ENCODE measurements at regions of chr4 and their contacts with region 1.

Region 1: DNA sequence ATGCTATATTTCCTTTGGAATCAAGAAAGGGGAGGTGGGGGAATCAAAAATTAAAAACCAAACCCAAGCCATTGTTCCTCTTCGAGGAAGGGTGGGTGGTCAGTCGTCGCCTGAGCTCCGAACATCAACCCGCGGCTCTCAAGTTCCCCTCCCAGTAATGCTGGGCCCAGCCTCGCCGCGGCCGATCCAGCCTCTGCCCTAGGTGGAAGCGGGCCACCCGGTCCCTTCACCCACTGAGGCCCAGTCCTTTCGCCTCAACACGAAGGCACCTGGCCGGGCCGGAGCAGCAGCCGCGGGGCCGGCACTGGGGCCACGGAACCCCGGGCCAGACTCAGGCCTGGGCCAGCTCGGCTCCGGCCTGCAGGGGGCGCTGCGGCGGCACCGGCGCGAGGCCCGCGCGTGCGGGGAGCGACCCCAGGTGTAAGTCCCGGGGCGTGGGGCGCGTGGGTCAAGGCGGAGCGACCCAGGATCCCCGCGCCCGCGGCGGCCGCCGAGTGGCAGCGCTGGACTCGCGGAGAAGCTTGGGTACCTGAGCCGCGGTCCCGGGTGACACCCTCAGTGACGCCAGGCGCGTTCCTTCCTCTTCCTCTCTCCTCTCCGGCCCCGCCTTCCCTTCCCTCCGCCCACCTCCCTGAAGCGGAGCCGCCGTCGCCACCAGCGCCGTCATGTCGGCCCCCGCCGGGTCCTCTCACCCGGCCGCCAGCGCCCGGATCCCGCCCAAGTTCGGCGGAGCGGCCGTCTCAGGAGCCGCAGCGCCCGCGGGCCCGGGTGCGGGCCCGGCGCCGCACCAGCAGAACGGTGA is at the start of gene SEC24B:
- DNase-seq: peak; percentile 67
- ATAC-seq: peak; percentile 86
- H3K4me3 ChIP-seq: peak within 1 kb of the TSS; percentile 79
- H3K27ac ChIP-seq: peak within 1 kb of the TSS; percentile 43
- H3K4me1 ChIP-seq: peaks cover 22% of the 10 kb centered on the region
- H3K27me3 ChIP-seq: no peaks in the 10 kb centered on the region
- CTCF ChIP-seq: peak; percentile 68
- total RNA-seq, gene SEC24B: 10.2 and 11.3 TPM in 2 replicates

Region 2: GRCh38 chr4:109559983-109560686 is 126.7 kb after region 1 on chr4 and contains the start of gene MCUB:
- CTCF ChIA-PET with region 1: no interaction called
- POLR2A ChIA-PET with region 1: interaction called, 10 read pairs
- intact Hi-C with region 1: loop called (anchors 5 kb)
- DNase-seq: peak; percentile 89
- ATAC-seq: peak; percentile 91
- H3K4me3 ChIP-seq: peak within 1 kb of the TSS; percentile 96
- H3K27ac ChIP-seq: peak within 1 kb of the TSS; percentile 73
- H3K4me1 ChIP-seq: peaks cover 15% of the 10 kb centered on the region
- H3K27me3 ChIP-seq: no peaks in the 10 kb centered on the region
- CTCF ChIP-seq: no peak
- total RNA-seq, gene MCUB: 18.4 and 21.7 TPM in 2 replicates

Region 3: DNA sequence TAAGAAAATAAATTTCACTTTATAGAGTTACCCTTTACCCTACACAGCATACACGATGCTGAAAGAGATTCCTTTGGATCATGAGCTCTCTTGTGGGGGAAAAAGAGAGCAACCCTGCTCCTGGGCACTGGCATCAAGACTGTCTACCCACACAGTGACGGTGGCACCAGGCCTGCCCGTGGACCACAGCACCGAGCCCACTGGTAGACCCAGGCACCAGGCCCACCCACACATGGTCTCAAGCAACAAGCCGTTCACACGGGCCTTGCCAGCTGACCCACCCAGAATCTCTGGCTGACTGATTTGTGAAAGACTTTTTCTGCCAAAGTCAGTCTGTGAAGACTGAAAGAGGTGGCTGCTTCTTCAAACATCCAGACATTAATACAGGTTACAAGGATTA is 361.7 kb after region 1 on chr4:
- CTCF ChIA-PET with region 1: no interaction called
- POLR2A ChIA-PET with region 1: no interaction called
- intact Hi-C with region 1: no loop called
- DNase-seq: no peak
- ATAC-seq: no peak
- H3K4me3 ChIP-seq: no peak overlapping the region
- H3K27ac ChIP-seq: no peak overlapping the region
- H3K4me1 ChIP-seq: no peaks in the 10 kb centered on the region
- H3K27me3 ChIP-seq: no peaks in the 10 kb centered on the region
- CTCF ChIP-seq: no peak

Region 4: GRCh38 chr4:109815151-109816081 is 382.0 kb after region 1 on chr4 and contains the start of gene GAR1:
- CTCF ChIA-PET with region 1: no interaction called
- POLR2A ChIA-PET with region 1: no interaction called
- intact Hi-C with region 1: loop called (anchors 5 kb)
- DNase-seq: peak; percentile 93
- ATAC-seq: peak; percentile 98
- H3K4me3 ChIP-seq: peak within 1 kb of the TSS; percentile 98
- H3K27ac ChIP-seq: peak within 1 kb of the TSS; percentile 79
- H3K4me1 ChIP-seq: peaks cover 8% of the 10 kb centered on the region; the same call in 1 of the 2 replicates
- H3K27me3 ChIP-seq: no peaks in the 10 kb centered on the region
- CTCF ChIP-seq: no peak
- total RNA-seq, gene GAR1: 15.9 and 26.0 TPM in 2 replicates

Measured in PC-3 (cell line).